Activated CD4-positive, alpha-beta T cell treated with anti-CD3 and anti-CD28 coated beads for 36 hours (primary cell): ENCODE measurements at regions of chr7 and their contacts with region 1.

Region 1: DNA sequence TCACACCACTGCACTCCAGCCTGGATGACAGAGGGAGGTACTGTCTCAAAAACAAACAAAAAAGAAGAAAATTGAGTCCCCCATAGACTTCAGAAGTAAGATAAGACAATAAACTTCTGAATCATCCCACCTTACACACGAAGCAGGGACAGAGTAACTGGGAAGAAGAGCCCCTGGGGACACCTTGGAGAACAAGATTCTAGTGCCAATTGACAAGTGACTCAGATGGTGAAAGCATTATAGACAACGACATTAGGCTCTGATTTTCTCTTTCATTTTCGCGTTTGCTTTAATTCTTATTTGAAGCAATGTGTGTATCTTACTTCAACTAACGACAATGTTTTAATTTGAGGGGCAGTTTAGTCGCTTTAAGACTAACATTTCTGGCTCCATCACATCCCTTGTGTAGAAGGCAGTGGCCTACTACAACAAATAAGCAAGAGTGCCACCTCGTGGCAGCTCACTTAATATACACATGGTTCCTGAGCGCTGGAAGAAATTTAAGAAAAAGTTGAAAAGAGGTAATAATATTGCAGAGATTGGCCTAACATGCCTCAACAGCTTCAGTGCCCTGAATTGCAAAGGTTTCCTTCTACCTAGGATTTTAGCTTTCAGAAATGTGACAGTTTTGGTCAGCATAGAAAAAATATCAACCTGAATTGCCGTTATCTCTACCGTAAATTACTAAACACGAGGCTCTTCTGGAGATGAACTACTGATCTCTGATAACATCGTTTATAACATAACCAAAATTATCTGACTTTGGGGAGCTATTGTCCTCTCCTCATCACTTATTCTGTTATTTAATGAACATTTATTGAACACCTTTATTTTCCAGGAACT is 36.7 kb downstream of the ASNS start:
- DNase-seq: peak; percentile 80
- ATAC-seq: peak; percentile 78
- H3K4me3 Mint-ChIP-seq: no peak overlapping the region
- H3K27ac Mint-ChIP-seq: no peak overlapping the region
- H3K4me1 Mint-ChIP-seq: no peaks in the 10 kb centered on the region
- H3K27me3 Mint-ChIP-seq: peaks cover 27% of the 10 kb centered on the region

Region 2: DNA sequence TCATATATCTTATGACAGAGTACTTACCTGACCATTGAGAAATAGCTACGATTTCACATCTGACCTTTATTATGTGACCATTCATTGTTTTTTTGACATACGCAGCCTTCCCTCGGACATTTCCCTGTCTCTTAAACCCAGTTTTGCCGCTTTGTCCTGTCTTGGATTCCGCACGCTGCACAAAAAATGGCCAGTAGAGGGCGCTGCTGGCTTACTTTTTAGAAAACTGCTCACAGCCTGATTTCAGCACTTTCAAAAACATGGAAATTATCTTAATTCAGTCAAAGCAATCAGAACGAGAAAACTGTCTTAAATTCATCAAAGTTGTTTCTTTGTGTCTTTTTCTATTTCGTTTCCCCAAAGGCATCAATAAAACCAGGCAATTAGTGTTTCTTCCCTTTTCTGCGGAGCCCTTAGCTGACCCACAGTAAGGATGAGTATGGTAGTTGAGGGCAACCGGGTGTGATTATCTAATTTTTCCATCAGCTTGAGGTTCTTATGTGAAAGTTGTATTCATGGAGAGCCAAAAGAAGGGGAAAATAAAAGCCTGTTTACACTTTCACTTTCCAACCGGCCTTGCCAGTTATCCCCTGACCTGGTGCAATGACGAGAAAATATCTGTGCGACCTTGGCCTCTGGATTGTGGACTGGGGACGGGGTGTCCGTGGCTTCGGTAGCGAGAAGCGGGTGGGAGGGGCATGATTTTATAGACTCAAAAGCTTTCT is 1918.8 kb before region 1 on chr7:
- CTCF ChIA-PET with region 1: no interaction called
- POLR2A ChIA-PET with region 1: no interaction called
- intact Hi-C with region 1: loop called (anchors 5 kb)
- DNase-seq: peak; percentile 86
- ATAC-seq: no peak
- H3K4me3 Mint-ChIP-seq: no peak overlapping the region
- H3K27ac Mint-ChIP-seq: no peak overlapping the region
- H3K4me1 Mint-ChIP-seq: peaks cover 2% of the 10 kb centered on the region
- H3K27me3 Mint-ChIP-seq: peaks cover 15% of the 10 kb centered on the region

Region 3: GRCh38 chr7:97104719-97105238 is 730.7 kb before region 1 on chr7:
- CTCF ChIA-PET with region 1: interaction called, 16 read pairs
- POLR2A ChIA-PET with region 1: no interaction called
- intact Hi-C with region 1: loop called (anchors 1 kb)
- DNase-seq: peak; percentile 85
- ATAC-seq: peak; percentile 85
- H3K4me3 Mint-ChIP-seq: no peak overlapping the region
- H3K27ac Mint-ChIP-seq: no peak overlapping the region
- H3K4me1 Mint-ChIP-seq: no peaks in the 10 kb centered on the region
- H3K27me3 Mint-ChIP-seq: peaks cover 16% of the 10 kb centered on the region

Region 4: GRCh38 chr7:97145068-97145467 is 690.4 kb before region 1 on chr7:
- CTCF ChIA-PET with region 1: no interaction called
- POLR2A ChIA-PET with region 1: no interaction called
- intact Hi-C with region 1: loop called in 1 of 2 experiments (anchors 1 kb)
- DNase-seq: no peak
- ATAC-seq: no peak
- H3K4me3 Mint-ChIP-seq: no peak overlapping the region
- H3K27ac Mint-ChIP-seq: no peak overlapping the region
- H3K4me1 Mint-ChIP-seq: peaks cover 5% of the 10 kb centered on the region
- H3K27me3 Mint-ChIP-seq: no peaks in the 10 kb centered on the region

Region 5: GRCh38 chr7:97499204-97499603 is 336.3 kb before region 1 on chr7:
- CTCF ChIA-PET with region 1: interaction called, 7 read pairs
- POLR2A ChIA-PET with region 1: no interaction called
- intact Hi-C with region 1: loop called in 1 of 2 experiments (anchors 1 kb)
- DNase-seq: peak; percentile 37
- ATAC-seq: no peak
- H3K4me3 Mint-ChIP-seq: no peak overlapping the region
- H3K27ac Mint-ChIP-seq: no peak overlapping the region
- H3K4me1 Mint-ChIP-seq: no peaks in the 10 kb centered on the region
- H3K27me3 Mint-ChIP-seq: peaks cover 6% of the 10 kb centered on the region

Region 6: GRCh38 chr7:97671571-97671970 is 163.9 kb before region 1 on chr7:
- CTCF ChIA-PET with region 1: no interaction called
- POLR2A ChIA-PET with region 1: no interaction called
- intact Hi-C with region 1: no loop called
- DNase-seq: no peak
- ATAC-seq: no peak
- H3K4me3 Mint-ChIP-seq: no peak overlapping the region
- H3K27ac Mint-ChIP-seq: no peak overlapping the region
- H3K4me1 Mint-ChIP-seq: no peaks in the 10 kb centered on the region
- H3K27me3 Mint-ChIP-seq: peaks cover 3% of the 10 kb centered on the region

Region 7: GRCh38 chr7:97819161-97819560 is 16.4 kb before region 1 on chr7:
- CTCF ChIA-PET with region 1: interaction called, 12 read pairs
- POLR2A ChIA-PET with region 1: no interaction called
- intact Hi-C with region 1: no loop called
- DNase-seq: no peak
- ATAC-seq: no peak
- H3K4me3 Mint-ChIP-seq: no peak overlapping the region
- H3K27ac Mint-ChIP-seq: no peak overlapping the region
- H3K4me1 Mint-ChIP-seq: no peaks in the 10 kb centered on the region
- H3K27me3 Mint-ChIP-seq: peaks cover 2% of the 10 kb centered on the region

Region 8: GRCh38 chr7:97845622-97846203 is 10.2 kb after region 1 on chr7:
- CTCF ChIA-PET with region 1: interaction called, 15 read pairs
- POLR2A ChIA-PET with region 1: no interaction called
- intact Hi-C with region 1: no loop called
- DNase-seq: peak; percentile 20
- ATAC-seq: no peak
- H3K4me3 Mint-ChIP-seq: no peak overlapping the region
- H3K27ac Mint-ChIP-seq: no peak overlapping the region
- H3K4me1 Mint-ChIP-seq: no peaks in the 10 kb centered on the region
- H3K27me3 Mint-ChIP-seq: peaks cover 5% of the 10 kb centered on the region